ENCODE measurements at regions of chr19 and their contacts with region 1.

Region 1: DNA sequence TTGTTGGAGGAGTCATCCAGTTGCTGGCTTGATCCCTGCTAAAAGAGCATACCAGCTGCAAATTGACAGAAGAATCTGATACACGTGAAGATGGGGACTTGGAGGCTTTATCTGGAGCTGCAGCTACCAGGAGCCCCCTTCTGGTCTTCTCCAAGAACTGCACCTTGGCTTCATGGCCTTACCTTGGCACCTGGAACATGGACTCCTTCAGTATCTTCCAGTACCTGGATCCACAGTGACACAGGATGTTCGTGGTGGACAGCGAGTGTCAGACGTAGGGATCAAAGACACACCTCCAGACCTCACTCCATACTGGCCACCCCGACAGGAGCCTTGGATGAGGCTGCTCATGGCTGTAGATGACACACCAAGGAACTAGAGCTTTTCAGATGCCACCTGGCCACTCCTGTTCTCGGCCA is 9.9 kb upstream of the ACSBG2 start:
- DNase-seq: peak; percentile 89
- H3K4me3 ChIP-seq: no peak overlapping the region
- H3K27ac ChIP-seq: no peak overlapping the region
- H3K4me1 ChIP-seq: no peaks in the 10 kb centered on the region
- H3K27me3 ChIP-seq: no peaks in the 10 kb centered on the region

Region 2: DNA sequence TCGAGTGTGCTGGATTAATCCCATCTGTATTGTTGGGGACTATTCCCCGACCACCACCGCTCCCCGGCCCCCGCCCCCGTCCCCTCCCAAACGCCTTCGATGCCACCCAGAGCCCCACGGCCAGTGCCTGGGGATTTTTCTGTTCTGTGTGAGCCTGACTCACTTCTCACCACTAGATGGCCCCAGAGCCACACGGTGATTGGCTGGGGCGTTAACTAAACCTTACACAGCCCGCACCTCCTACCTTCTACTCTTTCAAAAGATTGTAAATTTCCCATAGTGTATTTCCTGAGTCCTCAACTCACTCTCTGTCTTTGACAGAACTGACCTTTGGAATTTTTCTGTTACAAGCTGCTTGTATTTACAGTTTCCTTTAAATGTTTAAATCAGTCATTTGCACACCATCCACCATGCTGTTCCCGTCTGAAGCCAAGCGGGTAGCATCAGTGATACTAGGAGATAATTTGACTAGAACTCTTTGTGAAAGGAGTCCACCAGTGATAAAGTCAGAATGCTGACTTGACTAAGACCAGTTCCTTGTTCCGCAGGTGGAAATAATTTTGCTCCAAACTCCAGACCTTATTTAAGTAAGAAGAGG is 76.7 kb before region 1 on chr19:
- in situ Hi-C with region 1: loop called (anchors 10 kb)
- DNase-seq: peak; percentile 86
- H3K4me3 ChIP-seq: no peak overlapping the region
- H3K27ac ChIP-seq: no peak overlapping the region
- H3K4me1 ChIP-seq: no peaks in the 10 kb centered on the region
- H3K27me3 ChIP-seq: no peaks in the 10 kb centered on the region